Left ventricle myocardium superior (tissue), 1 donor: ENCODE measurements at regions of chr1 and their contacts with region 1.

Region 1: GRCh38 chr1:66503841-66504470 is 30.0 kb upstream of the SGIP1 start:
- DNase-seq: peak; percentile 29
- ATAC-seq: peak; percentile 79

Region 2: DNA sequence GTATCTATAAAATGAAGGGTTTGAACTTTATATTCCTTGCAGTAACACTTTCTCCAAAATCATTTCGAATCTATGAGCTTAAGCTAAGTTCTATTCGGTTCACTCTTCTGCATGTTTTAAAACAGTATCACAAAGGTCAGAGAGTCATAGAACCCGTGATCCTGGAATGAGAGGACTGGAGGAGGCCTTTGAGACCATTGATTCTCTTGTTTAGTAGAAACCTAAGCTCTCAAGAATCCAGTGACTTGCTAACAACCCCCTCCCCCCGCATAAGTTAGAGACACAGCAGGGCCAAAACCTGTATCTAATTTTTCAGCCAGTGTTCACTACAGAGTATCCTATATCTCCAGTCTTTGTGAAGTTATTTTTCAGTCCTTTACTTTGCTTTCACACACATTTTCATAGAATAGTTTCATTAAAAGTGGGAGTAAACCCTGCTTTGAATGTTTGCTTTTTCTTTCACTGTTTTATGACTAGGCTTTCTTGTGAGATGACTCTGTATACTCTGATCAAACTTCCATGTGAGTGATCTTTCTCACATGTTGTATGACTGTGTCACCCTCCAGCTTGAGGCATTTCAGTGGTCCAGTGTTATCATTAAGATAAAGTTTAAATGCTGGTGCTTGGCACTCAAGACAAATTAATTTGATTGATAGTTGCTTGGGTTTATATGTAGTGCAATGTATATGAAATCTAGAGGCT is 245.4 kb before region 1 on chr1:
- intact Hi-C with region 1: loop called (anchors 5 kb)
- DNase-seq: no peak
- ATAC-seq: no peak

Region 3: GRCh38 chr1:66552829-66553228 is 48.9 kb after region 1 on chr1:
- intact Hi-C with region 1: no loop called
- DNase-seq: peak; percentile 54
- ATAC-seq: peak; percentile 42